ENCODE measurements at regions of chr2 and their contacts with region 1.

Region 1: DNA sequence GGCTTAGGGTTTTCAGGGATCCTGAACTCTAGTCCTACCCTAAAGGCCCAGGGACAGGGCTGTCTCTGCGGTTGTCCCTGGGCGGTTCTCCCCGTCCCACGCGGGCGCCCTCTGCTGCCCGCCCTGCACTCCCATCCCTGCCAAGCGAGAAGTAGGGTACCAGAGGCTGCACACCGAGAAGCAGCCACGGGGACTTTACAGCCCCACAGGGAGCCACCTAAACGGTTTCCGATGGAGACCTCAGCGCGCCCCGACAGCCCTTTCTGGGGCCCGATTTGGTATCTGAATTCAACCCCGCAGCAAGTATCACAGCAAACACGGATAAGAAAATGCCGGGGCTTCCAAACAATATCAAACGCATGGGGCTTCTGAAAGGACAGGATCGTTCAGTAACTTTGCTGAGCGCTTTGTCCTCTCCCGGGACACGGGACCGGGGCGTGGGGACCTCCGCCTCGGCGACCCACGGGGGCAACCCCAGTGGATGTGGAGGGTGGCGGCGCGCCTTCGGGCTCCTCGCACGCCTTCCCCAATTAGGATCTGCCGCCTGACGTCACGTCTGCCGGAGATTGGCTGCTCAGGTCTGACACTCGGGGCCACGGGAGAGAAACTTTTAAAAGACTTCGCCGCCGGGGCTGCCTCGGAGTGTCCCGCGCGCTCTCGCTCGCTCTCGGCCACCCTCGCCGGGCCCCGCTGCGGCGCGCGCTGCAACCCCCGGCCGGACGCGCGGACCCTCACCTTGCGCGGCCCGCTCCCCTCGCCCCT is at the start of gene LTBP1:
- DNase-seq: peak; percentile 72
- H3K4me3 Mint-ChIP-seq: peak within 1 kb of the TSS; percentile 74
- H3K27ac Mint-ChIP-seq: no peak within 1 kb of the TSS
- H3K4me1 Mint-ChIP-seq: peaks cover under 1% of the 10 kb centered on the region
- H3K27me3 Mint-ChIP-seq: peaks cover 9% of the 10 kb centered on the region
- total RNA-seq, gene LTBP1: 0.10 to 0.27 TPM

Region 2: DNA sequence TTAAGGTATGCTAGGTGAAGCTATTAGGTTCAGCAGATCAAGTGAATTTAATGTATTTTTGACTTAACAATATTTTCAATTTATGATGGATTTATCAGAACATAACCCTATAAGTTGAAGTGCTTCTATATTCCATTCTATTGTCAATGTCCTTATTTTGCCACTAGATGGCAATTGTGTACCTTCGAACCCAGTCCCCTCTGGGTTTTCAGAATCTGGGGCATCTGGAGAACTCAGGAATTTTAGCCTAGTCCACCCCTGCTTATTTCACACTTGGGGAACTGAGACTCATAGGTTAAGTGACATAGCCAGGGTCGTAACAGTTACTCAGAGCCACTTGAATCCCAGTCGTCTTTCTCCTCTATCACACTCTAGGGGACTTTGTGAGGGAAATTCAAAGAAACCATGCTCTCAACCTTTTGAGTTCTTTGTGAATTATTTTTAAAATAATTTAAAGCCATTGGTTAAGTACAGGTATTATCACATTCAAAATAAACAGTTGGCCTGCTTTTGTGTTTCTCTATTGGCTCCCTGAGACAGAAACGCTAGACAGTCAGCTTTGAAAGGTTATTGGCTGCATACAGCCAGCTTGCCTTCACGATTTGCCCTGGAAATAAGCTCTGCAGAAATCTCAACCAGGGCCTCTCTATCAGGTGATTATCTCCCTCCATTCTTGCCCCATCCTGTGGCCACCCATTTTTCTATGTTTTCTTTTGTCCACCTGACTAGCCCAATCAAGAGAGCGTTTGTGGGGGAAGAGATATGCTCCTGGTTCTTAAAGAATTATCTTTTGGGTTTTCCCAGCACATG is 173.7 kb before region 1 on chr2:
- CTCF ChIA-PET with region 1: interaction called, 3 read pairs
- POLR2A ChIA-PET with region 1: no interaction called
- intact Hi-C with region 1: loop called (anchors 2 kb)
- DNase-seq: no peak
- H3K4me3 Mint-ChIP-seq: no peak overlapping the region
- H3K27ac Mint-ChIP-seq: no peak overlapping the region
- H3K4me1 Mint-ChIP-seq: peaks cover 7% of the 10 kb centered on the region
- H3K27me3 Mint-ChIP-seq: no peaks in the 10 kb centered on the region